Psoas muscle (tissue), 8 donors: ENCODE measurements at regions of chr5 and their contacts with region 1.

Region 1: DNA sequence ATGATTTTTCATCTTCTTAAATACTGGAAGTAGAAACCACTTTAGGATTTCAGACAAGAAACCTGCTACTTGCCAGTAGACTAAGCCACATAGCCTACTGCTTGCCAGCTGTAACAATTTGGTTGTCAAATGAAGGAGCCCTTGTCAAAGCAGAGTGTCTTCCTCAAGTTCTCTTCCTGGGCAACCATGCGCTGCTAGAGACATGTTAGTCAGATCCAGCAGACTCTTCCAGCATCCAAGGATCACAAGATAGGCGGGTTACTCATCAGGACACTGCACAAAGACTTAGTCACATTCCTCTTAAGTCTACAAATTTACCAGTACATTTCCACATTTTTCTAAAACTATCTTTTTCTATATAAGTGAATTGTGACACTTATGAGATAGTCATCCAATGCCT is 24.4 kb downstream of the SKIC3 start:
- DNase-seq: no peak
- ATAC-seq: peak in 1 of 4 donors; percentile 49
- H3K4me3 ChIP-seq: no peak overlapping the region
- H3K27ac ChIP-seq: no peak overlapping the region
- H3K4me1 ChIP-seq: no peaks in the 10 kb centered on the region
- H3K27me3 ChIP-seq: no peaks in the 10 kb centered on the region
- CTCF ChIP-seq: no peak

Region 2: GRCh38 chr5:95460662-95461061 is 69.8 kb before region 1 on chr5:
- intact Hi-C with region 1: no loop called
- DNase-seq: no peak
- ATAC-seq: no peak
- H3K4me3 ChIP-seq: no peak overlapping the region
- H3K27ac ChIP-seq: no peak overlapping the region
- H3K4me1 ChIP-seq: no peaks in the 10 kb centered on the region
- H3K27me3 ChIP-seq: no peaks in the 10 kb centered on the region
- CTCF ChIP-seq: no peak

Region 3: DNA sequence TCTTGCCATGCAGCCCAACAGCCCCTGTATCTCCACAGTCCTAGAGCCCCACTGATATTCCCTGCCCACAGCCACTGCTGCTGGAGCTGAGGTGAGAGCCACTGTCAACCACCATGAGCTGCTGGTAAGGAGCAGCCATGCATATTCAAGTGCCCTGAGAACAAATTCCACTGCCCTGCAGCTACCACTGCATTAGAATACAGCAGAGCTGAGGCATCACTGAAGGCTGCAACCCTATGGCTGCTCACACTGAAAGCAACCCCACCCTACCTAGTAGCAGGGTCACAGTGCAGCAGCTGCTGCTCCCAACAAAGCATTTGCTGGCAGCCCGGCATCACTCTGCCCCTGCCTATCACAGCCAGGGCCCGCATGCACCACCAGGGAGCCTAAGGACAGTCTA is 44.2 kb before region 1 on chr5:
- intact Hi-C with region 1: loop called in 1 of 2 experiments (anchors 10 kb)
- DNase-seq: no peak
- ATAC-seq: no peak
- H3K4me3 ChIP-seq: no peak overlapping the region
- H3K27ac ChIP-seq: no peak overlapping the region
- H3K4me1 ChIP-seq: no peaks in the 10 kb centered on the region
- H3K27me3 ChIP-seq: no peaks in the 10 kb centered on the region
- CTCF ChIP-seq: no peak

Region 4: GRCh38 chr5:96771395-96771794 is 1241.0 kb after region 1 on chr5:
- intact Hi-C with region 1: loop called in 1 of 2 experiments (anchors 5 kb)
- DNase-seq: no peak
- ATAC-seq: no peak
- H3K4me3 ChIP-seq: no peak overlapping the region
- H3K27ac ChIP-seq: no peak overlapping the region
- H3K4me1 ChIP-seq: no peaks in the 10 kb centered on the region
- H3K27me3 ChIP-seq: no peaks in the 10 kb centered on the region
- CTCF ChIP-seq: no peak